ENCODE measurements at regions of chr1 and their contacts with region 1.

Region 1: GRCh38 chr1:113904674-113905434 is at the starts of genes AP4B1 and DCLRE1B:
- DNase-seq: peak; percentile 88 to 98 (median 97)
- ATAC-seq: peak; percentile 96
- H3K4me3 ChIP-seq: peak within 1 kb of the TSS; percentile 82
- H3K4me3 Mint-ChIP-seq: peak within 1 kb of the TSS; percentile 92 to 100 (median 99)
- H3K27ac ChIP-seq: peak within 1 kb of the TSS; percentile 89
- H3K27ac Mint-ChIP-seq: peak within 1 kb of the TSS; percentile 96 to 100 (median 99)
- H3K4me1 ChIP-seq: peaks cover 15 to 21% of the 10 kb centered on the region in 2 donors
- H3K4me1 Mint-ChIP-seq: peaks cover 36 to 62% (median 54%) of the 10 kb centered on the region in 7 donors
- H3K27me3 ChIP-seq: no peaks in the 10 kb centered on the region
- H3K27me3 Mint-ChIP-seq: peaks cover 0 to 4% (median 0%) of the 10 kb centered on the region in 5 donors
- total RNA-seq, gene AP4B1: 50.8 to 75.4 (median 65.0) TPM
- total RNA-seq, gene DCLRE1B: 4.1 to 13.6 (median 6.9) TPM

Region 2: DNA sequence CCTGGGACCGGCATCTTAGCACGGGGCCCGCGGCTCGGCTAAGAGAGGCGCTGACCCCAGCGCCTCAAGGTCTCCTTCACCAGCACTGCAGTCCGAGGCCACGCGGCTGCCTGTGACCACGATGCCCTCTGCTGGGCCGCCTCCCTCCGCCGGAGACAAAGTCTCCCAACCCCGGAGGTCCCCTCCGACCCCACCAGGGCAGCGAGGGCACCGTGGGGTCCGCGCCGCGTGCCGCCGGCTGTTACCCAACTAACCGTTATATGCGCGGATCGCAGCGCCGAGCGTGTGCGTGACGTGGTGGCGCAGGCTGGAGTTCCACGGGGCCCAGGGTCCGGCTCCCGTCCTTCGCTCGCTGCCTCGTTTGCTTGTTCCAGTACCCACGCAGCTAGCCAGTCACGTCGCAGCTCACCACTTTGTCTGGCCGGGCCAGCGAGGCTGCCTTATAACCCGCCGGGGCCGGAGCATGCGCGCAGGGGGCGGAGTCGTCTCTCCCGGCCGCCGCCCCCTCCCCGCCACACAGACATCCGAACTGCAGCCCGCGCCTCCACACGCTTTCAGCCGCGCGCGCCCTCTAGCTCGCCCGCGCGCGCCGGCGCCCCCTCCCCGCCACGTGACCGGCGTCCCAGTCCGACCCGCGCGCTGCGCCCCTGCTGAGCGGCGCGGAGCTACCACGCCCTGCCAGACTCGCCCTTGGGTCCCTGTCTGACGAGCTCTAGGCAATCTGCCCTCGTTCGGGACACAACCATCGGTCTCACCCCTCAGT is 948.9 kb before region 1 on chr1 and contains the start of gene SLC16A1:
- CTCF ChIA-PET with region 1: no interaction called
- POLR2A ChIA-PET with region 1: no interaction called
- intact Hi-C with region 1: loop called in 1 of 2 experiments (anchors 10 kb)
- DNase-seq: peak; percentile 80 to 94 (median 87)
- ATAC-seq: peak; percentile 90
- H3K4me3 ChIP-seq: peak within 1 kb of the TSS; percentile 97
- H3K4me3 Mint-ChIP-seq: peak within 1 kb of the TSS; percentile 71 to 100 (median 97)
- H3K27ac ChIP-seq: peak within 1 kb of the TSS; percentile 81
- H3K27ac Mint-ChIP-seq: peak within 1 kb of the TSS; percentile 25 to 100 (median 88)
- H3K4me1 ChIP-seq: peaks cover 16 to 17% of the 10 kb centered on the region in 2 donors
- H3K4me1 Mint-ChIP-seq: peaks cover 33 to 66% (median 57%) of the 10 kb centered on the region in 7 donors
- H3K27me3 ChIP-seq: no peaks in the 10 kb centered on the region
- H3K27me3 Mint-ChIP-seq: no peaks in the 10 kb centered on the region
- total RNA-seq, gene SLC16A1: 10.1 to 43.6 (median 19.1) TPM

Region 3: DNA sequence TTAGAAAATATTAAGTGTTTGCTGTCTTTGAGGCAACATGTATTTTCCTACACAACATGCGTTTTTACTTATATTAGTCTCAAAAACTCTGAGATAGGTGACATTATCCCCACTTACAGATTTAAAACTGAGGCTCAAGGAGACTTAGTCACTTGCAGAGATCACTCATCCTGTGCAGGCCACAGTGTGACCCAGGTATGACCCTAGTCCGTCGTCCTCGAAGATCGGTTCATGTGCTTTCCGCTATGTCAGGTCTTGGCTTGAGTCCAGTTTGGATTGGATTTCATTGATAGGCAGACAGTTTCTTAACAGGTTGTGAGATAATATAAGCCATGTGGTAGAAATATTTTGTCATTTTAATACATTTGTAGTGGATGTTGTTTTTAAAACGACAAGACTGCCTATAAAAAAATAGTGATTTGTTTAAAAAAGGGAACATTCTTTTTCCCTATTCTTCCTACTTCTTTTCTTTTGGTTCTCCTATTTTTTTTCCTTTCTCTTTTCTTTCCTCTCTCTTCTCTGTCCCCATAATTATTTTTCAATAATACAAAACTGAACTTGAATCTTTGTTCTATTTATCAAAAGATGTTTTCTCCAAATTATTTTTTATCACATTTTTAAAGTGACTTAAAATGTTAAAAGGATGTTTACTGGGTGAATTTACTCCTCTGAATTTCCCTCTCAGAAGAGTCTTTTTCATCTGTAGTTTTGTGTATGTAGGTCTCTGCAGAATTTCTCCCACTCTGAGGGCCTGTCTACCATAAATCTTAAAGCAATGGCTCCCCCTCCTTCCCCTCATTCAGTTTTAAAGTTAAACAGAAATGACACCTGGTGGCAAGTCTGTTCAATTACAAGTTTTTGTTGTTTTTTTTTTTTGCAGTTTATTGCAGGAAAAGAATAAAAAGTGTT is 227.3 kb before region 1 on chr1:
- CTCF ChIA-PET with region 1: no interaction called
- POLR2A ChIA-PET with region 1: no interaction called
- intact Hi-C with region 1: loop called in 1 of 2 experiments (anchors 10 kb)
- DNase-seq: peak in 5 of 9 donors; percentile 23 to 49 (median 39)
- ATAC-seq: peak; percentile 60
- H3K4me3 ChIP-seq: no peak overlapping the region
- H3K4me3 Mint-ChIP-seq: no peak overlapping the region
- H3K27ac ChIP-seq: no peak overlapping the region
- H3K27ac Mint-ChIP-seq: no peak overlapping the region
- H3K4me1 ChIP-seq: no peaks in the 10 kb centered on the region
- H3K4me1 Mint-ChIP-seq: peaks cover 0 to 10% (median 0%) of the 10 kb centered on the region in 7 donors
- H3K27me3 ChIP-seq: no peaks in the 10 kb centered on the region
- H3K27me3 Mint-ChIP-seq: no peaks in the 10 kb centered on the region

Region 4: DNA sequence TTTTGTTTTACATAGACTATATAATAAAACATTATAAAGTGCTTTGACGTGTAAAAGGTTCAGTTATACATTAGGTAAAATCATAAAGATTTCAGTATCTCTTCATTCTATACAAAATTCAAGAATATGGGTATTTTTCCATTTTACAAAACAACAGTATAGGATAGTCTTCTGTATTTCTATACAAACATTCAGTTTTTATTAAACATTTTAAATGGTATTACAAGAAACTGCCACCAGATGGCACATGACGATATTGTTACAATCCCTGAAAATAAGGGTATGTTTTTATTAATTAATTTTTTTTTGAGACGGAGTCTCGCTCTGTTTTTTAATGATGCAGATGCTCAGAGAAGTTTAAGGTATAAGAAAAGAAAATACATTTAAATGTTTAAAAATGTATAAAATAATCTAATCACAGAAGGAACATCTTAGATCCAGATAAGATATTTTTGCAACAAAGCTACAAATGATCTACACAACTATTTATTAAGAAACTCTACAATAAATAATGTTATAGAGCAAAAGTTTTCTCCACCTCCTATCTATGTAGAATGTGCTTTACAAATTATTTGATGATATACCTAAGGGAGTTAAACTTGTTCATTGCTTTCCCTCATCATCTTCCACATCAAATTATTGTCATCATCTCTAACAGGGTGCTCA is 69.1 kb before region 1 on chr1:
- CTCF ChIA-PET with region 1: interaction called, 40 read pairs
- POLR2A ChIA-PET with region 1: interaction called, 21 read pairs
- intact Hi-C with region 1: loop called (anchors 1 kb)
- DNase-seq: peak in 7 of 9 donors; percentile 26 to 61 (median 51)
- ATAC-seq: peak; percentile 66
- H3K4me3 ChIP-seq: no peak overlapping the region
- H3K4me3 Mint-ChIP-seq: no peak overlapping the region
- H3K27ac ChIP-seq: no peak overlapping the region
- H3K27ac Mint-ChIP-seq: peak overlapping the region in 2 of 9 donors; percentile 14 to 47
- H3K4me1 ChIP-seq: no peaks in the 10 kb centered on the region
- H3K4me1 Mint-ChIP-seq: peaks cover 4 to 10% (median 8%) of the 10 kb centered on the region in 7 donors
- H3K27me3 ChIP-seq: no peaks in the 10 kb centered on the region
- H3K27me3 Mint-ChIP-seq: no peaks in the 10 kb centered on the region

Region 5: DNA sequence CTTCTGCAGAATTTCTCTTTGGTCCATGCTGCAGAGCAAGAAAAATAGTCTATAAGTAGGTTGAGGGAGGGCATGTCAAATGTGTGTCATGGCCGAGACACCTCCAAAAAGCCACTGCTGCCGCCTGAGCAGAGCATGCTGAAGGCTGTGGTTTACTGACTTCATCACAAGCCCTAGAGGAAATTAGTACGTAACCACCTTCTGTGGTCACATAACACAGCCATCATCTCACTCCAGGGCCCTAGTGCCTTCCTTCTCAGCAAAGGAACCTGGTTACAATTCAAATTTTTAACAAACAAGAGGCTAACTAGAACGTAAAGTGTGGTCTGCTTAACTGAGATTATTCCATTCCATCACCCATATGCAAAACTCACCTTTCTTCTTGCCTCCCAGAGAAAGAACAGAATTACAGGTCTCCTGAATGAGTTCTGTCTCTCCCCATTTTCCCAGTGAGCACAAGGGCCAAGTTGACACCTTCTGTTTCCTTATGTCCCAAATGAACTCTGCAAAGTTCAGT is 33.2 kb before region 1 on chr1 and contains the start of gene PTPN22:
- CTCF ChIA-PET with region 1: interaction called, 7 read pairs
- POLR2A ChIA-PET with region 1: interaction called, 11 read pairs
- intact Hi-C with region 1: loop called (anchors 1 kb)
- DNase-seq: peak; percentile 41 to 91 (median 87)
- ATAC-seq: peak; percentile 98
- H3K4me3 ChIP-seq: peak within 1 kb of the TSS; percentile 81
- H3K4me3 Mint-ChIP-seq: peak within 1 kb of the TSS; percentile 82 to 95 (median 92)
- H3K27ac ChIP-seq: peak within 1 kb of the TSS; percentile 87
- H3K27ac Mint-ChIP-seq: peak within 1 kb of the TSS; percentile 94 to 99 (median 98)
- H3K4me1 ChIP-seq: peaks cover 30 to 65% of the 10 kb centered on the region in 2 donors
- H3K4me1 Mint-ChIP-seq: peaks cover 37 to 77% (median 72%) of the 10 kb centered on the region in 7 donors
- H3K27me3 ChIP-seq: no peaks in the 10 kb centered on the region
- H3K27me3 Mint-ChIP-seq: no peaks in the 10 kb centered on the region
- total RNA-seq, gene PTPN22: 22.2 to 76.7 (median 27.5) TPM

Region 6: GRCh38 chr1:113963281-113963906 is 58.5 kb after region 1 on chr1:
- CTCF ChIA-PET with region 1: no interaction called
- POLR2A ChIA-PET with region 1: interaction called, 3 read pairs
- intact Hi-C with region 1: loop called in 1 of 2 experiments (anchors 1 kb)
- DNase-seq: peak in 3 of 9 donors; percentile 25 to 46 (median 39)
- ATAC-seq: peak; percentile 68
- H3K4me3 ChIP-seq: no peak overlapping the region
- H3K4me3 Mint-ChIP-seq: no peak overlapping the region
- H3K27ac ChIP-seq: no peak overlapping the region
- H3K27ac Mint-ChIP-seq: peak overlapping the region in 8 of 9 donors; percentile 22 to 87 (median 76)
- H3K4me1 ChIP-seq: no peaks in the 10 kb centered on the region
- H3K4me1 Mint-ChIP-seq: peaks cover 4 to 35% (median 20%) of the 10 kb centered on the region in 7 donors
- H3K27me3 ChIP-seq: no peaks in the 10 kb centered on the region
- H3K27me3 Mint-ChIP-seq: no peaks in the 10 kb centered on the region

Region 7: DNA sequence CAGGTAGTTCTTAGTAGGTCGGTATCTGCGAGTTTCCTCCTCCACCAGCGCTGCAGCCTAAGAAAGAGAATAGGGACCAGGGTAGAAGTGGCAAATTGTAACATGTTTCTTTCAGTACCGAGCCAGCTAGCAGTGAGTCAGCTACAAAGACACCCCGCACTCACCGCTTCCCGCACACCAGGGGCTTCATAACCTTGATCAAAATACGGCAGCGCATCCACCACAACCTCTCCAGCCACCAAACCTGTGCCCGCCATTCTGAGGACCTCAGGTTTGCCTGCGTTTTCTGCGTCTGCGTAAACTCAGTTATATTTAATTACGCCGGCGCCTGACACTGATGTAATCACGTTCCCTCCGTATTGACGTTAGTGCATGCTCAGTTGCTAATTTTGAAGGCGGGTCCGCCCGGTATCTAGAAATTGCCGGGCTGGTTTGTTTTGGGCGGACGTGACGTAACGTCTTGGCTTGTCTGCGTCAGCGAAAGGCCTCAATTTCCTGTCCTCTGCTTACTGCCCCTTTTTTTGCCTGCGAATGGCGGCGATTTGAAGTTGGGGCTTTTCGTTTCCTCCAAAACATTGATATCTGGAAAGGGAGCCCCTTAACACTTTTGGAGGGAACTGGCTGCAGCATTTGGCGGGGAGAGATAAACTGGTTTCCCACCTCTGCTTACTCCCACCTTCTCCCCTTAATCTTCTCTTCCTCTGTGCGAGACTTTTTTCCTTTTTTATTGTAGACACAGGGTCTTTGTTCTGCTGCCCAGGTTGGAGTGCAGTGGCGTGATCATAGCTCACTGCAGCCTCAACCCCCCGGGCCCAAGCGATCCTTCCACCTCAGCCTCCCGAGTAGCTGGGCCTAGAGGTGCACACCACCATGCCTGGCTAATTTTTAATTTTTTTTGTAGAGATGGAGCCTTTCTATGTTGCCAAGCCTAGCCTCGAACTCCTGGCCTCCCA is 676.8 kb after region 1 on chr1 and contains the start of gene BCAS2:
- CTCF ChIA-PET with region 1: no interaction called
- POLR2A ChIA-PET with region 1: no interaction called
- intact Hi-C with region 1: loop called in 1 of 2 experiments (anchors 5 kb)
- DNase-seq: peak; percentile 71 to 98 (median 97)
- ATAC-seq: peak; percentile 97
- H3K4me3 ChIP-seq: peak within 1 kb of the TSS; percentile 76
- H3K4me3 Mint-ChIP-seq: peak within 1 kb of the TSS; percentile 92 to 99 (median 98)
- H3K27ac ChIP-seq: peak within 1 kb of the TSS; percentile 93
- H3K27ac Mint-ChIP-seq: peak within 1 kb of the TSS; percentile 95 to 99 (median 98)
- H3K4me1 ChIP-seq: peaks cover 21 to 23% of the 10 kb centered on the region in 2 donors
- H3K4me1 Mint-ChIP-seq: peaks cover 14 to 55% (median 41%) of the 10 kb centered on the region in 7 donors
- H3K27me3 ChIP-seq: peaks cover 0 to 3% of the 10 kb centered on the region in 2 donors
- H3K27me3 Mint-ChIP-seq: peaks cover 0 to 4% (median 4%) of the 10 kb centered on the region in 5 donors
- total RNA-seq, gene BCAS2: 32.3 to 87.1 (median 46.0) TPM

Measured in naive thymus-derived CD4-positive, alpha-beta T cell (primary cell).